ENCODE measurements at regions of chrX and their contacts with region 1.

Region 1: DNA sequence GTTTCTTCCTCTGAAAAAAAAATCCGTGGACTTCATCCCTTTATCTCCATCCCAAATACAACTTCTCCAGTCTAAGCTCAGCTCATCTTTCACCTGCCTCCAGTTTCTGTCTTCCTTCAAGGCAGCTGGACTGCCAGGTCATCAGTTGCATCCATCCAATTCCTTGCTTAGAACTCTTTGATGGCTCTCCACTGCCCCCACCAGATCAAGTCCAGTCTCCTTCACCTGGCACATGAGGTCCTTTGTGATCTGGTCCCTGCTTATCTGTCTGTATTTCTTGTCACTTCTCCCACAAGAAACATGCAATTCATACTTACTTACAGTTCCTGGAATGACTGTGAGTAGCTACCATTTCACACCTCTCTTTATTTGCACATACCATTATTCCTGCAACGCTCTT is 33.8 kb downstream of the OTUD6A start:
- DNase-seq: no peak
- H3K4me3 ChIP-seq: no peak overlapping the region
- H3K27ac ChIP-seq: no peak overlapping the region
- H3K27me3 ChIP-seq: peaks cover 0 to 65% (median 19%) of the 10 kb centered on the region in 45 donors
- CTCF ChIP-seq: peak in 1 of 56 donors; percentile 10

Region 2: DNA sequence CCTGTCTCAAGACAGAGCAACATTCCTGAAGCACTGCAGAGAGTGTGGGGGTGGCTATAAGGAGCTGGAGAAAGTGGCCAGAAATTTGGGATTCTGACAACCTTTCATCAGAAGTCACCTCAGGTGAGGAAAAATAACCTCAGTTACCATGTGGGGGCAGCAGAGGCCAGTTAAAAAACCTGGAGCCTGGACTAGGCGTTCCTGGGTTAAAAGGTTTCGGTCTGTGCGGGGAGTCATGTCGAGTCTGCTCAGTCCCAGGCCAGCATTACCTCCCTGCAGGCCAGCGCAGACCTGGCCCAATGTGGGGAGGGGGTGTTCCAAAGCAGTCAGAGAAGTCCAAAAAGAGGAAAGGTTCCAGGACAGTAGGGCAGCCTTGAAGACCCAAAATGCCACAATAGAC is 602.9 kb before region 1 on chrX:
- intact Hi-C with region 1: loop called (anchors 5 to 10 kb)
- DNase-seq: peak in 1 of 10 donors; percentile 21
- H3K4me3 ChIP-seq: no peak overlapping the region
- H3K27ac ChIP-seq: no peak overlapping the region
- H3K27me3 ChIP-seq: peaks cover 0 to 96% (median 56%) of the 10 kb centered on the region in 45 donors
- CTCF ChIP-seq: peak in 53 of 56 donors; percentile 12 to 68 (median 42)

Region 3: GRCh38 chrX:69538321-69538876 is 557.7 kb before region 1 on chrX:
- intact Hi-C with region 1: loop called (anchors 5 to 10 kb)
- DNase-seq: peak in 7 of 10 donors; percentile 24 to 71 (median 55)
- H3K4me3 ChIP-seq: peak overlapping the region in 55 of 59 donors; percentile 19 to 64 (median 46)
- H3K27ac ChIP-seq: peak overlapping the region in 3 of 59 donors; percentile 46 to 68 (median 56)
- H3K27me3 ChIP-seq: peaks cover 0 to 86% (median 36%) of the 10 kb centered on the region in 45 donors
- CTCF ChIP-seq: peak in 55 of 56 donors; percentile 28 to 82 (median 68)

Region 4: DNA sequence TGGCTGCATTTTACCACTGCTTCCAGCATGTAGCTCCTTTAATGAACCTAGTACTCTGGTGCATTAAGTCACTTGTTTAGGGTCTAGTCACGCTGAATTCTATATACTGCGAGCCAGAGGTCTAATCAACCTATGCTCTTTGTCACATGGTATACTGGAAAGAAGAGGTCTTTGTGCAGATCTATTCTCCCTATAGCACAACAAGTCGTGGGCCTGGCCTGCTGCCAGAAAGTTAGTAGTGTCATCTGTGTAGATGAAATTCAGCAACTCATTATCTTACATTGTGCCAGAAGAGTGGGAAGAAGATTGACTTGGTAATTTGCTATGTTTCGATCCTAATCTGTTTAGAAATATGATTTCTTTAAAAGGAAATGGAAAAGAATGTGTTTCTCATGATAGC is 127.1 kb before region 1 on chrX:
- intact Hi-C with region 1: no loop called
- DNase-seq: peak in 4 of 10 donors; percentile 5 to 27 (median 15)
- H3K4me3 ChIP-seq: no peak overlapping the region
- H3K27ac ChIP-seq: no peak overlapping the region
- H3K27me3 ChIP-seq: peaks cover 0 to 52% (median 11%) of the 10 kb centered on the region in 45 donors
- CTCF ChIP-seq: no peak

Region 5: DNA sequence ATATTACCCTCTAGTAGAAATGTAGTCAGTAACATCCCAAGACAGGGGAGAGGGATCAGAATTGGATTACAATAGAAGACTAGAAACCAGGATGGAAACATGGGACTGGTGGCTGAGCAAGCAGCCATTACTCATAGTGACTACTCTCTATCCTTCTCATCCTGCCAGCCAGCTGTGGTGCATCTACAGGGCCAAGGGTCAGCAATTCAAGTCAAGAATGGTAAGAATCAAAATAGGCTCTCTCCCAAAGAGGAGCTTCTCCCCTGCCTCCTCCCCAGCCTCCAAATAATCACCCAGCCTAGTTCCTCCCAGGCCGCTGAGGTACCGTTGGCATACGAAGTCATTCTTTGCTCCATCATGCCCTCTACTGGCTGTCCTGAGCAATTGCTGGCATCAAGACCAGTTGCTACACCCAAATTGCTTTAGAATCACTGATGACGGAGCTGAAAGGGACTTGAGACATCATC is 65.7 kb before region 1 on chrX:
- intact Hi-C with region 1: loop called in 1 of 2 experiments (anchors 2 kb)
- DNase-seq: peak in 5 of 10 donors; percentile 9 to 50 (median 16)
- H3K4me3 ChIP-seq: no peak overlapping the region
- H3K27ac ChIP-seq: no peak overlapping the region
- H3K27me3 ChIP-seq: peaks cover 0 to 95% (median 37%) of the 10 kb centered on the region in 45 donors
- CTCF ChIP-seq: peak in 55 of 56 donors; percentile 39 to 80 (median 66)

Region 6: DNA sequence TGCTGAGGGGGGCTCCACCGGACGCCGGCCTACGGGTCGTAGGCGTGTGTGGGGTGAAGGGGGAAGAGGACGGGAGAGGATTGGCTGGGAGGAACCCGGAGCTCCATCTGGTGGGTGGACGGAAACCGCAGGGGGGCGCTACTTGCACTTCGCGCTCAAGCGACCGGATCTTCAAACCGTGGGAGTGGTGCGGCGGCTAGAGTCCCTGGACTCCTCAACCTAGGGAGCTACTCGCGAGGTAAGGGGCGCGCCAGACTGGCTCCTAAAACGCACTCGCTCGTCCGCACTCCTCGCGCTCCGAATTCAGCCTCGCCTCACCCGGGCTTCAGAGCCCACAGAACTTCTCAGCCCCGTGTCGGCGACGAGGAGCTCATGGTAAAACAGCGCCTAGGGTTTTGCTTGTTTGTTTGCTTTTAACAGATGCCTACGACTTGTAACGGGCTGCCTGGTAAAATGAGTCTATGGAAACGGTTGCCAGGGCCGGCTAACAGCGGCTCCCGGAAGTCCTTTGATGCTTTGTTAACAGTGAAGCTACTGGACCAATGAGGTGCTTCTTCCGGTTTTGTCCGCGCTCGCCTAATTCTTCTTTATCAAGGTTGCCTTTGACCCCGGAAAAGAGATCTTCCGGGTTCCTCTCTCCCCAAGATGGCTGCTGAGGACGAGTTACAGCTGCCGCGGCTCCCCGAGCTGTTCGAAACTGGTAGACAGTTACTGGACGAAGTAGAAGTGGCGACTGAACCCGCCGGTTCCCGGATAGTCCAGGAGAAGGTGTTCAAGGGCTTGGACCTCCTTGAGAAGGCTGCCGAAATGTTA is 37.5 kb after region 1 on chrX and contains the start of gene IGBP1:
- intact Hi-C with region 1: no loop called
- DNase-seq: peak; percentile 64 to 92 (median 84)
- H3K4me3 ChIP-seq: peak within 1 kb of the TSS; percentile 54 to 86 (median 72)
- H3K27ac ChIP-seq: peak within 1 kb of the TSS in 51 of 59 donors; percentile 29 to 86 (median 67)
- H3K27me3 ChIP-seq: peaks cover 0 to 43% (median 5%) of the 10 kb centered on the region in 45 donors
- CTCF ChIP-seq: peak; percentile 26 to 78 (median 60)
- total RNA-seq, gene IGBP1: 25.0 to 50.5 (median 38.3) TPM